CD8-positive, alpha-beta T cell (primary cell): ENCODE measurements at regions of chr2 and their contacts with region 1.

Region 1: DNA sequence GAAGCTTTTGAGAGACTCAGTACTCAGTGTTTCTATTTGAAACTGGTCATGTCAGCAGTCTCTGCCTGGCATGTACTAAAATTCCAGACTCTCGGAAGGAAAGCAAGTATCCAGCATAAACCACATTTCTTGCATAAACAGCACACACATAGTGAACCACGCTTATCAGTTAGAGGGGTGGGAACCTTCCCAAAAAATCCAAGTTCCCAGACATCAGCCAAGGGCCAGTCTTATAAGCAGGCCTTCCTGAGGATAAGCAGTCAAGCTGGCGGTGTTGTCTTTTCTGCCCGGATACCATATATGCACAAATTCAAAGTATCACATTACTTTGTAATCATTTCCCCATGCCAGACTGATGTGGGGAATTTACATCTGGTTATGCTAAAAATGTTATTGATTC is 73.6 kb downstream of the ST6GAL2 start:
- DNase-seq: no peak
- ATAC-seq: no peak
- H3K4me3 ChIP-seq: no peak overlapping the region
- H3K4me3 Mint-ChIP-seq: no peak overlapping the region
- H3K27ac ChIP-seq: no peak overlapping the region
- H3K27ac Mint-ChIP-seq: no peak overlapping the region
- H3K4me1 ChIP-seq: no peaks in the 10 kb centered on the region
- H3K4me1 Mint-ChIP-seq: no peaks in the 10 kb centered on the region
- H3K27me3 ChIP-seq: no peaks in the 10 kb centered on the region
- H3K27me3 Mint-ChIP-seq: peaks cover 11% of the 10 kb centered on the region
- CTCF ChIP-seq: no peak

Region 2: GRCh38 chr2:106841886-106842645 is 29.7 kb after region 1 on chr2:
- CTCF ChIA-PET with region 1: no interaction called
- POLR2A ChIA-PET with region 1: no interaction called
- intact Hi-C with region 1: loop called in 1 of 2 experiments (anchors 1 kb)
- DNase-seq: no peak
- ATAC-seq: no peak
- H3K4me3 ChIP-seq: no peak overlapping the region
- H3K4me3 Mint-ChIP-seq: no peak overlapping the region
- H3K27ac ChIP-seq: no peak overlapping the region
- H3K27ac Mint-ChIP-seq: no peak overlapping the region
- H3K4me1 ChIP-seq: no peaks in the 10 kb centered on the region
- H3K4me1 Mint-ChIP-seq: no peaks in the 10 kb centered on the region
- H3K27me3 ChIP-seq: no peaks in the 10 kb centered on the region
- H3K27me3 Mint-ChIP-seq: no peaks in the 10 kb centered on the region
- CTCF ChIP-seq: no peak